Dorsolateral prefrontal cortex (tissue), 120 donors: ENCODE measurements at regions of chr3 and their contacts with region 1.

Region 1: GRCh38 chr3:71955240-71956068 is 170.5 kb upstream of the PROK2 start:
- DNase-seq: peak; percentile 66 to 87 (median 84)
- H3K4me3 ChIP-seq: peak overlapping the region in 22 of 59 donors; percentile 3 to 44 (median 20)
- H3K27ac ChIP-seq: peak overlapping the region in 42 of 59 donors; percentile 3 to 86 (median 52)
- H3K27me3 ChIP-seq: no peaks in the 10 kb centered on the region
- CTCF ChIP-seq: peak; percentile 68 to 95 (median 88)

Region 2: DNA sequence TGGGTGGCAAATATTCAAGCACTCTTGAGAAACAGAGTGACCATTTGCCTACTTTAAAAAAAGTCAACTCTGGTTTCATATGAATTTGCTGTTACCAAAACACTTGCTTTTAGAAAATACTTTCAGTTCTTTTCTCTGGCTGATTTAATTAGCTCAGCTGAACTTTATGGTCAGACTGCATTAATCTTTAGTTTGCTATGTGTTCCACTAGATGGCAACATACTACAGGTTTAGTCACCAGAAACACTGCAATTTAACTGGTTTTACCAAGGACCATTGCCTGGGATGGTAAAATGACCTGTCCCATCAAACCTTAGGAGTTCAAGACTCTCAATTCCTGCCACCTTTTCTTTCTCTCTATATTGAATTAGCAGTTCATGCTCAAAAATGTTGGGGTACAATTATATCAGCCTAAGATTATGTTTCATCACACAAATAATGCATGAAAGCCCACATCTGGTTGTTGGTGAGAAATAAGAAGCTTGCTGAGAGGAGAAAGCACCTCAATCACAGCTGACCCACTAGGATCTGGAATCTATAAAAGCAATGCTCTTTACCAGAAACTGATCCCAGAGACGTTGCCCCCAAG is 244.5 kb before region 1 on chr3:
- intact Hi-C with region 1: loop called in 1 of 2 experiments (anchors 5 kb)
- DNase-seq: no peak
- H3K4me3 ChIP-seq: no peak overlapping the region
- H3K27ac ChIP-seq: peak overlapping the region in 16 of 59 donors; percentile 4 to 94 (median 40)
- H3K27me3 ChIP-seq: no peaks in the 10 kb centered on the region
- CTCF ChIP-seq: peak; percentile 32 to 86 (median 72)

Region 3: GRCh38 chr3:71875461-71875947 is 80.0 kb before region 1 on chr3:
- intact Hi-C with region 1: loop called (anchors 5 kb)
- DNase-seq: peak; percentile 54 to 88 (median 82)
- H3K4me3 ChIP-seq: no peak overlapping the region
- H3K27ac ChIP-seq: peak overlapping the region in 2 of 59 donors; percentile 5 to 15
- H3K27me3 ChIP-seq: peaks cover 0 to 4% (median 0%) of the 10 kb centered on the region in 45 donors
- CTCF ChIP-seq: peak; percentile 71 to 97 (median 91)

Region 4: GRCh38 chr3:72152551-72153476 is 197.4 kb after region 1 on chr3:
- intact Hi-C with region 1: loop called in 1 of 2 experiments (anchors 10 kb)
- DNase-seq: peak; percentile 41 to 73 (median 58)
- H3K4me3 ChIP-seq: peak overlapping the region; percentile 0 to 70 (median 48)
- H3K27ac ChIP-seq: peak overlapping the region; percentile 73 to 98 (median 94)
- H3K27me3 ChIP-seq: no peaks in the 10 kb centered on the region
- CTCF ChIP-seq: peak in 3 of 56 donors; percentile 9 to 22 (median 18)

Region 5: DNA sequence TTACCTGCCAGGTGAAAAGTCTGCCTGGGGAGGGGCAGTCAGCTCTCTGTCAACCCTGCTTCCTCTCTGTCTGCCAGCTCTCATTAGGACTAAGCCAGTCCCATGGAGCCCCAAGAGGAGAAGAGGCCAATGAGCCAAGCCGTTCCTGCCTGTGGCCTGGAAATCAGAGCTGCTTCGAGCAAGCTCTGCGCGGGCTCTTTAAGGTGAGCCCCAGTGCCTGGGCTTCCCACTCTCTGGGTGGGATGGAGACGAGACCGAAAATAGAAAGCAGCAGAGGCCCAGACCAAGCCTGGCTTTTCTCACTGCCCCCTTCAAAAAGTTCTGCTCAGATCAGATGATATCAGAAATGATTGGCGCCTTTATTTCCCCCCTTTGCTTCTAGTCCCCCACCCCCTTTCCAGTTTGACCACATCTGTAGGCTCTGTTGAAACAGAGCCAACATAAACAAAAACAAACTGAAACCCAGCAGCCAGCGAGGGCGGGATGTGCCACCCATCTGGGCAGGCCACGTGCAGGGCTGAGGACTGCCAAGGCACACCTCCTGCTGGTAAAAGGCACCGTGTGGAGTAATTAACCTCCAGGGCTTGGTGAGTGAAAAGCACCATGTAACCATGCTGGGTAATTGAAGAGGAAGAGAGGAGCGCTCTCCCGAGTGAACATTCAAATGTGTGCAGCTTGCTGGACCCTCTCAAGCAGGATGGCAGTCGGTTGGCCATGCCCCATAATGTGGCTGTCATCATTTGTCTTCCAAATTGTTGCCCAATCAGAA is 300.5 kb after region 1 on chr3:
- intact Hi-C with region 1: loop called (anchors 5 to 10 kb)
- DNase-seq: peak in 2 of 10 donors; percentile 50 to 58
- H3K4me3 ChIP-seq: peak overlapping the region in 5 of 59 donors; percentile 5 to 36 (median 11)
- H3K27ac ChIP-seq: peak overlapping the region in 56 of 59 donors; percentile 7 to 91 (median 76)
- H3K27me3 ChIP-seq: no peaks in the 10 kb centered on the region
- CTCF ChIP-seq: peak in 23 of 56 donors; percentile 9 to 50 (median 24)

Region 6: GRCh38 chr3:72270072-72270681 is 314.7 kb after region 1 on chr3:
- intact Hi-C with region 1: loop called in 1 of 2 experiments (anchors 10 kb)
- DNase-seq: peak in 1 of 10 donors; percentile 31
- H3K4me3 ChIP-seq: no peak overlapping the region
- H3K27ac ChIP-seq: peak overlapping the region in 40 of 59 donors; percentile 0 to 99 (median 90)
- H3K27me3 ChIP-seq: no peaks in the 10 kb centered on the region
- CTCF ChIP-seq: no peak